ENCODE measurements at regions of chr21 and their contacts with region 1.

Region 1: DNA sequence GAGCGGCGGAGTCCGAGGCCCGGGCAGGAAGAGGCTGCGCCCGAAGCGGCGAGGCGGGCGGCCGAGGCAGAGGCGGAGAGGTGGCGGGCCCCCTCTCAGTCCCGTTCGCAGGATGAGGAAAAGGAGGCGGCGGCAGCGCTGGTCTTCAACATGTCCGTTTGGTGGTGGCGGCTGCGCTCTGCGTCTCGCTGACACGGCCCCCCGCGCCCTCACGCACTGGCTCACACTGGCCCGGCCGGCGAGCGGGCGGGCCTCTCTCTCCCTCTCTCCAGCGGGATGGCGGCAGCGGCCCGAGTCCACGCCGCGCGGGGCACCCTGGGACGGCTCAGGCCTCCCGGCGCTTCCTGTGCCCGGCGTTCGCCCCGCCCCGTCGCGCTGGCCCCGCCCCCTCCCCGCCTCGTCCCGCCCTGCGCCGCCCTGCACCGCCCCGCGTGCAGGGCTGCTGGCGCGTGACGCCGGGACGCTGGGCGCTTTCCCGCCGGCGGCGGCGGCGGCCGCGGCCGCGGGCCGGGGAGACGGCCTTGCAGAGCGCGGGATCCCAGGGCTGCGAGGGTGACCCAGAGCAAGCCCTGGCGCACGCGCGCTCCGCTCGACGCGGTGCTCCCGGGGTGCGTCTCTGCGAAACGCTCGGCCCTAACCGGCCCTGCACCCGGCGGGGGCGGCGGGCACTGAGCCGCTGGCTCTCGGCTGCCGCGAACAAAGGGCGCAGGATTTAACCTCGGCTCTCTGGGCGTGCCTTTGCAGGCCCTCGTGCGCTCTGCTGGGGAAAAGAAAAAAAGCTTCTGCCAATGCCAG is at the start of gene SCAF4:
- DNase-seq: peak; percentile 75
- H3K4me3 Mint-ChIP-seq: peak within 1 kb of the TSS; percentile 83
- H3K27ac Mint-ChIP-seq: peak within 1 kb of the TSS; percentile 64
- H3K4me1 Mint-ChIP-seq: peaks cover 18% of the 10 kb centered on the region
- H3K27me3 Mint-ChIP-seq: no peaks in the 10 kb centered on the region
- total RNA-seq, gene SCAF4: 39.6 to 40.5 TPM

Region 2: DNA sequence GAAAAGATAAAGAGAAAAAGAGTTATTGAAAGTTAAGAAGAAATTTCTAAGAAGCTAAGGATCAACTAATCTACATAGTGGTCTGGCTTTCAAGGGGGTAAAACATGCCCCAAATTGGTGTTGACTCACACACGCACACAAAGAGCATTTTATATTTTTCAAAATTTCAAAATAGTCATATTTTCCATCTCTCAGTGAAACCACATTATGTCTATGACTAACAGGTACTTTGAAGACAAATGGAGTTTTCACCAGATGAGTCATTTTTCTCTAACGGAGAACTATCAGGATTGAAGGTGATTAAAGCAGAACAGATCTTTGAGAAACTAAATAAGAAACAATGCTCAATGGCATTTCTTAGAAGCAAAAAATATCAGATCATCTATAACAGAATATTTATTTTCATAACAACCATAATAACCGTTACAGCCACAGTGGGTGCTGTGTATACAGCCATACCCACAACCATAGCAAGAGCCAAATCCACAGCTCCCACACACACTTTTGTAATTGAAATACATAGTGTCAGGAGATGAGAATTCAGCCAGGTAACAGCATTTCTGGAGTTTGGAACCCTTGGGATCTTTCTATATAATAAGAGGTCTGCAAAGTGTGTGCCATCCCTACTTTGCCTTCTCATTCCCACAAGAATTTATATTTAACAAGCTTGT is 1013.6 kb before region 1 on chr21 and contains the start of gene KRTAP21-3:
- CTCF ChIA-PET with region 1: no interaction called
- intact Hi-C with region 1: loop called (anchors 2 kb)
- DNase-seq: peak; percentile 33
- H3K4me3 Mint-ChIP-seq: no peak within 1 kb of the TSS
- H3K27ac Mint-ChIP-seq: peak within 1 kb of the TSS; percentile 46
- H3K4me1 Mint-ChIP-seq: peaks cover 21% of the 10 kb centered on the region
- H3K27me3 Mint-ChIP-seq: peaks cover 2% of the 10 kb centered on the region
- total RNA-seq, gene KRTAP21-3: not detected

Region 3: GRCh38 chr21:31185663-31186062 is 546.3 kb before region 1 on chr21:
- CTCF ChIA-PET with region 1: no interaction called
- intact Hi-C with region 1: loop called (anchors 2 kb)
- DNase-seq: peak; percentile 43
- H3K4me3 Mint-ChIP-seq: peak overlapping the region; percentile 70
- H3K27ac Mint-ChIP-seq: peak overlapping the region; percentile 98
- H3K4me1 Mint-ChIP-seq: peaks cover 76% of the 10 kb centered on the region
- H3K27me3 Mint-ChIP-seq: no peaks in the 10 kb centered on the region

Region 4: GRCh38 chr21:31659536-31660258 is 72.3 kb before region 1 on chr21 and contains the start of gene SOD1:
- CTCF ChIA-PET with region 1: no interaction called
- intact Hi-C with region 1: loop called (anchors 1 kb)
- DNase-seq: peak; percentile 95
- H3K4me3 Mint-ChIP-seq: peak within 1 kb of the TSS; percentile 100
- H3K27ac Mint-ChIP-seq: peak within 1 kb of the TSS; percentile 99
- H3K4me1 Mint-ChIP-seq: peaks cover 68% of the 10 kb centered on the region
- H3K27me3 Mint-ChIP-seq: no peaks in the 10 kb centered on the region
- total RNA-seq, gene SOD1: 281 to 297 TPM

Region 5: GRCh38 chr21:31665397-31665796 is 66.6 kb before region 1 on chr21:
- CTCF ChIA-PET with region 1: no interaction called
- intact Hi-C with region 1: loop called (anchors 1 kb)
- DNase-seq: peak; percentile 66
- H3K4me3 Mint-ChIP-seq: peak overlapping the region; percentile 17
- H3K27ac Mint-ChIP-seq: peak overlapping the region; percentile 48
- H3K4me1 Mint-ChIP-seq: peaks cover 93% of the 10 kb centered on the region
- H3K27me3 Mint-ChIP-seq: no peaks in the 10 kb centered on the region

Region 6: DNA sequence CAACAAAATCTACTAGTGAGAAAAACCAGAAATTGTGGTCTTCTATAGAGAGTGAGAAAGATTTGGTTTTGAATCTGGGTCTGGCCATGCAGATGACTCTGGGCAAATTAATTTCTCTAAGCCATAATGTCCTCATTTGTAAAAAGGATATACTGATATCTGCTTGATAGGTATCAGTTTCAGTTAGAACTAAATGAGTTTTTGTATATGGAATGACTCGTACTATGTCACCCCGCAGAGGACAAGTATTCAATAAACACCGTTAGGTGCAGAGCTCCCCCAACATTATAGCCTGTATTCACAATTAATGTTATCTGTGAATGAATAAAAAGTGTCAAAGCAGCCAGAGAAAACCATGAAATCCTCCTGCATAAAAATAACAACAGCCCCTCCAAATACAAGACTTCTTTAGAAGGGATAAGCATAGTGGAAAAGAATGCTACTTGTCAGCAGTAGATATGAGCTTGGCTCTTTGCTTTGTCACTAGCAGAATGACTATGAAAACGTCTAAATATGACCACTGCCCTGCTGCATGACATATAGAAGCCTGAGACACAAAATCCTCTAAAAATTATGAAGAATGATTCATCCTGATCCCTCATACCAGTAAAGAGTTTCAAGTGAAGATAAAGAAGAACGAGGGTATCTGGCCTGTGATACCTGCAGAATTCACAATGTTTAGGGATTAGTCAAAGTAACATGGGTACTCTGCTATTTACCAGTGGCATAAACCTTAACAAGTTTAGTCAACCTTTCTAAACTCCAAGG is 17.8 kb before region 1 on chr21:
- CTCF ChIA-PET with region 1: interaction called, 3 read pairs
- intact Hi-C with region 1: loop called (anchors 2 kb)
- DNase-seq: no peak
- H3K4me3 Mint-ChIP-seq: no peak overlapping the region
- H3K27ac Mint-ChIP-seq: peak overlapping the region; percentile 36
- H3K4me1 Mint-ChIP-seq: peaks cover 83% of the 10 kb centered on the region
- H3K27me3 Mint-ChIP-seq: no peaks in the 10 kb centered on the region

Region 7: DNA sequence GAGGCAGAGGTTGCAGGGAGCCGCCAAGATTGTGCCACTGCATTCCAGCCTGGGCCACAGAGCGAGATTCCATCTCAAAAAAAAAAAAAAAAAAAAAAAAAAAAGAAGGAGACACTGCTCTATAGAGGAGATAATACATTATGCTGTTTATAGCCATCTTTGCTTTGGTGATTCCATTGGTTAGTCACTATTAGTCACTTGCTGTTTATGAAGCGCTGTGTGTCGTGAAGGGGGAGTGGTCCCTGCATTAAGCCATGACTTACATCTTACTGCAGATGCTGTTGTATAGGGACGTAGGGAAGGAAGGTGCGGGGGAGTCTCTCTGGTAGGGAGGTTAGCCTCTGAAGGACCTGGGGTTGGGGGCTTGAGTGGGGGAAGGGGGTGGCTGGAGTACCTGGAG is 189.1 kb after region 1 on chr21:
- CTCF ChIA-PET with region 1: no interaction called
- intact Hi-C with region 1: no loop called
- DNase-seq: no peak
- H3K4me3 Mint-ChIP-seq: no peak overlapping the region
- H3K27ac Mint-ChIP-seq: no peak overlapping the region
- H3K4me1 Mint-ChIP-seq: no peaks in the 10 kb centered on the region
- H3K27me3 Mint-ChIP-seq: peaks cover 4% of the 10 kb centered on the region

Measured in activated naive CD4-positive, alpha-beta T cell treated with anti-CD3 and anti-CD28 coated beads for 36 hours (primary cell).